ENCODE measurements at regions of chr3 and their contacts with region 1.

Region 1: GRCh38 chr3:152317956-152318355 is 49.2 kb downstream of the MBNL1 start:
- DNase-seq: no peak
- H3K4me3 ChIP-seq: no peak overlapping the region
- H3K27ac ChIP-seq: no peak overlapping the region
- H3K4me1 ChIP-seq: peaks cover 2% of the 10 kb centered on the region
- H3K27me3 ChIP-seq: no peaks in the 10 kb centered on the region
- CTCF ChIP-seq: no peak
- EP300 ChIP-seq: no peak
- POLR2A ChIP-seq: no peak

Region 2: GRCh38 chr3:152281133-152281713 is 36.7 kb before region 1 on chr3:
- intact Hi-C with region 1: loop called in 1 of 4 experiments (anchors 2 kb)
- DNase-seq: no peak
- H3K4me3 ChIP-seq: no peak overlapping the region
- H3K27ac ChIP-seq: no peak overlapping the region
- H3K4me1 ChIP-seq: peaks cover 16% of the 10 kb centered on the region
- H3K27me3 ChIP-seq: no peaks in the 10 kb centered on the region
- CTCF ChIP-seq: no peak
- EP300 ChIP-seq: no peak
- POLR2A ChIP-seq: no peak

Region 3: GRCh38 chr3:152356870-152357276 is 38.9 kb after region 1 on chr3:
- intact Hi-C with region 1: no loop called
- DNase-seq: no peak
- H3K4me3 ChIP-seq: no peak overlapping the region
- H3K27ac ChIP-seq: no peak overlapping the region
- H3K4me1 ChIP-seq: peaks cover 2% of the 10 kb centered on the region
- H3K27me3 ChIP-seq: no peaks in the 10 kb centered on the region
- CTCF ChIP-seq: no peak
- EP300 ChIP-seq: no peak
- POLR2A ChIP-seq: no peak